ENCODE measurements at regions of chr1 and their contacts with region 1.

Region 1: GRCh38 chr1:244451951-244452795 is 464 bp upstream of the ADSS2 start:
- DNase-seq: peak; percentile 99
- ATAC-seq: peak; percentile 92
- H3K4me3 Mint-ChIP-seq: peak overlapping the region; percentile 89
- H3K27ac Mint-ChIP-seq: peak overlapping the region; percentile 98
- H3K4me1 Mint-ChIP-seq: peaks cover 37% of the 10 kb centered on the region
- H3K27me3 Mint-ChIP-seq: no peaks in the 10 kb centered on the region
- CTCF ChIP-seq: peak; percentile 29

Region 2: DNA sequence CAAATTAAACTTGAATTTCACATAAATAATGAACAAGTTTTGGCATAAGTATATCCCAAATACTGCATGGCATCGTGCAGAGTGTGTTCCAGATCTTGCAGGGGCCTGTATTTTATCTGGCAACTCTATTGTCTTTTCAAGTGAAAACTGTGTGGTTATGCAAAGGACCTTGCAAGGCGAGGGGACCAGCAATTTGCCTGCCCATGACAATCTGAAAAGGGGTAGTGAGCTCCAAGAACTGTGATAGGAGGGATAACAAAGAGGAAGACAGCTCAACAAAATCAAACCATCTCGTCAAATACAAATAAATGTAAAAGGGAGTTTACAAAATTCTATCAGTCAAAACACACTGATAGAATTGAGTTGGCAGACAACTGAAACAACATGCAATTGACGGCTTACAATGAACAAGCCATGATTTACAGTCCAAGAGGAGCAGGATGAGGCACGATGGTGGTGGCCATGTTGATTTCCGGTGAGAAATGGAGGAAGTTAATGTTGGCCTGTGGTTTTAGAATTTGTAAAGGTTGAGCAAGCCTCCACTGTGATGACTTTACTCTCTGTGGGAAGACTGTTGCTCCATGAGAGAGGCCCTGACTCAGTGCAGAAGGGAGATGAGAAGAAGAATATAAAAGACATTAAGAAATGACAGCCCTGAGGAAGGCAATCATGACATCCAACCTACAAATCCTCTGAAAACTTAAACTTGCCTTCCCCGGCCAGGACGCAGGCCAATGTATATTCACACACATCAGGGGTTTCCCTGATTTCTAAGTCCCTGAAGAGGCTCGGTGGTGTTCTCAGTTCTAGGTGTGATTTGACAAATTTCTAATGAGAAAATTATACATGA is 132.7 kb before region 1 on chr1:
- CTCF ChIA-PET with region 1: no interaction called
- POLR2A ChIA-PET with region 1: no interaction called
- intact Hi-C with region 1: no loop called
- DNase-seq: peak; percentile 75
- ATAC-seq: peak; percentile 93
- H3K4me3 Mint-ChIP-seq: peak overlapping the region; percentile 0
- H3K27ac Mint-ChIP-seq: peak overlapping the region; percentile 73
- H3K4me1 Mint-ChIP-seq: peaks cover 32% of the 10 kb centered on the region
- H3K27me3 Mint-ChIP-seq: no peaks in the 10 kb centered on the region
- CTCF ChIP-seq: no peak

Region 3: GRCh38 chr1:244361764-244362473 is 90.3 kb before region 1 on chr1:
- CTCF ChIA-PET with region 1: no interaction called
- POLR2A ChIA-PET with region 1: no interaction called
- intact Hi-C with region 1: no loop called
- DNase-seq: no peak
- ATAC-seq: no peak
- H3K4me3 Mint-ChIP-seq: no peak overlapping the region
- H3K27ac Mint-ChIP-seq: no peak overlapping the region
- H3K4me1 Mint-ChIP-seq: no peaks in the 10 kb centered on the region
- H3K27me3 Mint-ChIP-seq: no peaks in the 10 kb centered on the region
- CTCF ChIP-seq: no peak

Region 4: DNA sequence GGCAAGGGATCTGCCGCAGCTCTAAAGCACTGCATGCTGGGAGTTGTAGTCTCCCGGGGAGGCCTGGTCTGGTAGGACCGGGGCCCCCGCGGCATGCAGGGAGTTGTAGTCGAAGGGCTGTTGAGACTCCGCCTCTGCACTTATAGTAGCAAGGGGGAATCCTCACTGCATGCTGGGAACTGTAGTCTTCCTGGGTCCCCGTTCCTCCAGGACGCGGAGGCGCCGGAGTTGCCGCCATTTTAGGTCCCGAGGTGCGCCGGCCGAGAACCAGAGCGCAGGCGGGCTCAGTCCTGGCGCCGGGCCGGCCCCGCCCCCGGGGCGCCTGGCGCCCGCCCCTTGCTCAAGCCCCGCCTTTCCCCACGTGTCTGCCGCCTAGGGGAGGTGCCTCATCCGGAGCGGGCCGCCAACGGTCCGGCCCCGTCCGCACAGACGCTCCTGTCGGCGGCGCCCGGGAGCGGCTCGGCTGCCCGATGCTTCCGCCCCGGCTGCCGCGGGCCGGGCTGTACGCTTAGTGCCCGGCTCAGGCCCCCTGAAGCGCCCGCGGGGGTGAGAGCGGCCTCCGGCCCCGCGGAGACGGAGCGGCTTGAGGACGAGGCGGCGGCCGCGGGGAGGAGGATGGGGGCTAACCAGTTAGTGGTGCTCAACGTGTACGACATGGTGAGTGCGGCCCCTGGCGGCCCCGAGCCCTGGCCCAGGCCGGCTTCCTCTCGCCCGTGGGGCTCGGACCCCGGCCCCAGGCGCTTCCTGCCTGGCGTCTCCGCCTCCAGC is 200.7 kb after region 1 on chr1 and contains the start of gene DESI2:
- CTCF ChIA-PET with region 1: no interaction called
- POLR2A ChIA-PET with region 1: no interaction called
- intact Hi-C with region 1: loop called (anchors 5 kb)
- DNase-seq: peak; percentile 98
- ATAC-seq: peak; percentile 95
- H3K4me3 Mint-ChIP-seq: peak within 1 kb of the TSS; percentile 79
- H3K27ac Mint-ChIP-seq: peak within 1 kb of the TSS; percentile 86
- H3K4me1 Mint-ChIP-seq: peaks cover 23% of the 10 kb centered on the region
- H3K27me3 Mint-ChIP-seq: no peaks in the 10 kb centered on the region
- CTCF ChIP-seq: peak; percentile 56
- total RNA-seq, gene DESI2: 30.4 to 31.1 TPM

Measured in activated CD8-positive, alpha-beta T cell treated with anti-CD3 and anti-CD28 coated beads for 36 hours (primary cell).